ENCODE measurements at regions of chr2 and their contacts with region 1.

Region 1: DNA sequence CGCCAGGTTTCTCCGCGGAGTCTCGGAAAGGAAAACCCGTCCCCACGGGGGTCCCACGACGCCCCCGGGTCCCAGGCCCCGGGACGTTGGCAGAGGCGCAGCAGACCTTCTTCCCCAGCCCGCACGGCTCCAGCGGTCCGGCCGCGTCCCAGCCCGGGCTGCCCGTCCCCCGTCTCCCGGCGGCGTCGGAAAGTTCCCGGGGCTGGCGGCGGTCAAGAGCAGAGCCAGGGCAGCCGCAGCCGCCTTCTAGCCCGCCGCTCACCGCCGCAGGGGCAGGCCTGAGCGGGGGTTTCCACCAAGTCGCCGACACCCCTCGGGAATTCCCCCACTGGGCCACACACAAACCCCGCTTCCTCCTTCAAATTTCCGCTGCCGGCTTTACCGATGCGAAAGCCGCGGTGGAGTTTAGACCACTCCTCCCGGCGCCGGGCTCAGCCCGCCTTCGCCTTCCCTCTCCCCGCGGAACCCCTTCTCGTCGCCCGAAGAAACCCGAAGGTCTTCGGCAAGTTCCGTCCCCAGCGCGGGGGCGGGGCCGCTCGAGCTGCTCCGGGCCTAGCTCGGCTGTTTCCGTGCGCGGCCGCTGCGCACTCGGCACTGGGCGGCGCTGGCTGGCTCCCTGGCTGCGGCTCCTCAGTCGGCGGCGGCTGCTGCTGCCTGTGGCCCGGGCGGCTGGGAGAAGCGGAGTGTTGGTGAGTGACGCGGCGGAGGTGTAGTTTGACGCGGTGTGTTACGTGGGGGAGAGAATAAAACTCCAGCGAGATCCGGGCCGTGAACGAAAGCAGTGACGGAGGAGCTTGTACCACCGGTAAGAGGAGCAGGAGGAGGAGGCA is at the start of gene CREB1:
- DNase-seq: peak; percentile 99 to 100 (median 100)
- ATAC-seq: peak; percentile 87
- H3K4me3 ChIP-seq: peak within 1 kb of the TSS; percentile 75
- H3K4me3 Mint-ChIP-seq: peak within 1 kb of the TSS; percentile 95 to 100 (median 99)
- H3K27ac ChIP-seq: peak within 1 kb of the TSS; percentile 100
- H3K27ac Mint-ChIP-seq: peak within 1 kb of the TSS; percentile 98 to 100 (median 100)
- H3K4me1 ChIP-seq: peaks cover 52 to 59% of the 10 kb centered on the region in 2 donors
- H3K4me1 Mint-ChIP-seq: peaks cover 45 to 85% (median 69%) of the 10 kb centered on the region in 7 donors
- H3K27me3 ChIP-seq: no peaks in the 10 kb centered on the region
- H3K27me3 Mint-ChIP-seq: peaks cover 0 to 7% (median 0%) of the 10 kb centered on the region in 5 donors
- total RNA-seq, gene CREB1: 89.7 to 141 (median 115) TPM

Region 2: GRCh38 chr2:206085742-206086445 is 1443.7 kb before region 1 on chr2 and contains the start of gene INO80D:
- CTCF ChIA-PET with region 1: no interaction called
- POLR2A ChIA-PET with region 1: no interaction called
- intact Hi-C with region 1: loop called in 1 of 2 experiments (anchors 5 kb)
- DNase-seq: peak; percentile 71 to 92 (median 90)
- ATAC-seq: peak; percentile 95
- H3K4me3 ChIP-seq: peak within 1 kb of the TSS; percentile 97
- H3K4me3 Mint-ChIP-seq: peak within 1 kb of the TSS; percentile 96 to 99 (median 98)
- H3K27ac ChIP-seq: peak within 1 kb of the TSS; percentile 97
- H3K27ac Mint-ChIP-seq: peak within 1 kb of the TSS; percentile 98 to 100 (median 100)
- H3K4me1 ChIP-seq: peaks cover 0 to 9% of the 10 kb centered on the region in 2 donors
- H3K4me1 Mint-ChIP-seq: peaks cover 25 to 61% (median 47%) of the 10 kb centered on the region in 7 donors
- H3K27me3 ChIP-seq: no peaks in the 10 kb centered on the region
- H3K27me3 Mint-ChIP-seq: no peaks in the 10 kb centered on the region
- total RNA-seq, gene INO80D: 30.7 to 50.9 (median 43.4) TPM

Region 3: DNA sequence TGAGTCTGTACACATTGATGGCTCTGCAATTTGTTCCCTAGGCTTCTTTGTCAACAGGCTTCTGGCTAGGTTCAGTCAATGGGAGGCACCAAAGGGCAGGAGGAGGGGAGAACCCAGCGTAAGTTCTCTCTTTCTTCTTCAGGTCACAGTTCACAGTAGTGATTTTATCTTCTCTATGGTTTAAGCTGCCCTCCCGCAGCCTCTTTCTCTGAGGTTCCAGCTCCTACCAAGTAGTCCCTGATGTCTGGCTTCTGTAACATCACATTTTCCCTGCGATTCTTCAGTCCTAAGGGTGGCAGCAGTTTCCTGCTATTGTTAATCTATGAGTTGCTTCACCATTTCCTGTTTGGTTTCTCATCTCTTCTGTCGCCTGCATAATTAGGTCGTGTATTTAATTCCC is 482.8 kb before region 1 on chr2:
- CTCF ChIA-PET with region 1: interaction called, 3 read pairs
- POLR2A ChIA-PET with region 1: no interaction called
- intact Hi-C with region 1: loop called in 1 of 2 experiments (anchors 2 kb)
- DNase-seq: peak in 8 of 9 donors; percentile 24 to 69 (median 52)
- ATAC-seq: peak; percentile 79
- H3K4me3 ChIP-seq: no peak overlapping the region
- H3K4me3 Mint-ChIP-seq: peak overlapping the region in 8 of 10 donors; percentile 0 to 66 (median 12)
- H3K27ac ChIP-seq: no peak overlapping the region
- H3K27ac Mint-ChIP-seq: peak overlapping the region; percentile 2 to 78 (median 56)
- H3K4me1 ChIP-seq: peaks cover 0 to 4% of the 10 kb centered on the region in 2 donors
- H3K4me1 Mint-ChIP-seq: peaks cover 11 to 14% (median 13%) of the 10 kb centered on the region in 7 donors
- H3K27me3 ChIP-seq: no peaks in the 10 kb centered on the region
- H3K27me3 Mint-ChIP-seq: peaks cover 0 to 16% (median 0%) of the 10 kb centered on the region in 5 donors

Region 4: GRCh38 chr2:207184348-207184747 is 345.2 kb before region 1 on chr2:
- CTCF ChIA-PET with region 1: no interaction called
- POLR2A ChIA-PET with region 1: no interaction called
- intact Hi-C with region 1: no loop called
- DNase-seq: no peak
- ATAC-seq: no peak
- H3K4me3 ChIP-seq: no peak overlapping the region
- H3K4me3 Mint-ChIP-seq: no peak overlapping the region
- H3K27ac ChIP-seq: no peak overlapping the region
- H3K27ac Mint-ChIP-seq: no peak overlapping the region
- H3K4me1 ChIP-seq: no peaks in the 10 kb centered on the region
- H3K4me1 Mint-ChIP-seq: peaks cover 0 to 3% (median 0%) of the 10 kb centered on the region in 7 donors
- H3K27me3 ChIP-seq: no peaks in the 10 kb centered on the region
- H3K27me3 Mint-ChIP-seq: peaks cover 0 to 10% (median 0%) of the 10 kb centered on the region in 5 donors

Region 5: DNA sequence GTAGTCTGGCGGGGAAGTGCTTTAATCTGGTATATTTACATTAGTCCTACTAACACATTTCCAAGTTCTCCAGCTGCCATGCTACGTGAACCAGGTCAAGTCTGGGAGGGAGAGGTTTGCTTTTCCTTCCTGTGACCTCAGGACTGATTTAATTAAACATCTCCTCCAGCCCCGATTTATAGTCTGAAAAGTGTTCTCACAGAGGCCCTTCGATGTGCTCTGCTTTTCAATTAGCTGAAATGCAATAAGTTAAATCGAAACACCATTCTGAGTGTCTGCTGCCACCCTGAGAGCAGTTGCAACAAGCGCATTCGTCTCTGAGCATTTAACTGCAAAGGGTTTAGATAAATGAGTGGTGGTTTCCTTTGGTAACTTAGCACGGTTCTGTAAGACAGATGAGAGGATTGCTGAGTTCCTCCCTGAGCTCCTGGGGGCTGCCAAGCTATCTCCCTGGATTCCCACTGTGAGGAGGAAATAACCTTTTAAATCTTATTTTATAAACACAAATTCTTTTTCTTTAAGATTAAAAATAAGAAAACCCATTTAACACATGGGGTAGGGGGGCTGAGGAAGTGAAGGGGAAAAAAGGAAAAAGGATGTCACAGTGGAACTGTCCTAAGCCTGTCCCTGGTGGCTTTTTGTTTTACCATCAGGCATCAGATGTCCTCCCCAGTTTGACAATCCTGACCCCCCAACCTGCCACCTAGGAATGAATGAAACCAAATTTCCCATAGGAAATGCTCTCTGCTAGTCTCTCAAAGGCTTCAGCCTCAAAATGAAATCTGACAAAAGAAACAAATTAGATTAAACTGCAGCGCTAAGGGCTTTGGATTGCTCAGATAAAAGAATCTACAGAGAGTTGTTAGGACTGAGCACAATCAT is 56.3 kb before region 1 on chr2:
- CTCF ChIA-PET with region 1: interaction called, 3 read pairs
- POLR2A ChIA-PET with region 1: no interaction called
- intact Hi-C with region 1: loop called in 1 of 2 experiments (anchors 1 kb)
- DNase-seq: peak in 8 of 9 donors; percentile 25 to 68 (median 52)
- ATAC-seq: peak; percentile 76
- H3K4me3 ChIP-seq: no peak overlapping the region
- H3K4me3 Mint-ChIP-seq: peak overlapping the region in 4 of 10 donors; percentile 20 to 52 (median 42)
- H3K27ac ChIP-seq: no peak overlapping the region
- H3K27ac Mint-ChIP-seq: peak overlapping the region in 7 of 9 donors; percentile 14 to 71 (median 48)
- H3K4me1 ChIP-seq: no peaks in the 10 kb centered on the region
- H3K4me1 Mint-ChIP-seq: peaks cover 6 to 23% (median 18%) of the 10 kb centered on the region in 7 donors
- H3K27me3 ChIP-seq: no peaks in the 10 kb centered on the region
- H3K27me3 Mint-ChIP-seq: peaks cover 0 to 4% (median 0%) of the 10 kb centered on the region in 5 donors

Region 6: GRCh38 chr2:207540431-207540830 is 10.9 kb after region 1 on chr2:
- CTCF ChIA-PET with region 1: no interaction called
- POLR2A ChIA-PET with region 1: interaction called, 22 read pairs
- intact Hi-C with region 1: no loop called
- DNase-seq: no peak
- ATAC-seq: no peak
- H3K4me3 ChIP-seq: no peak overlapping the region
- H3K4me3 Mint-ChIP-seq: peak overlapping the region in 5 of 10 donors; percentile 7 to 51 (median 29)
- H3K27ac ChIP-seq: no peak overlapping the region
- H3K27ac Mint-ChIP-seq: peak overlapping the region in 2 of 9 donors; percentile 7 to 76
- H3K4me1 ChIP-seq: peaks cover 7 to 41% of the 10 kb centered on the region in 2 donors
- H3K4me1 Mint-ChIP-seq: peaks cover 40 to 87% (median 71%) of the 10 kb centered on the region in 7 donors
- H3K27me3 ChIP-seq: no peaks in the 10 kb centered on the region
- H3K27me3 Mint-ChIP-seq: no peaks in the 10 kb centered on the region

Region 7: GRCh38 chr2:207584952-207585351 is 55.4 kb after region 1 on chr2:
- CTCF ChIA-PET with region 1: no interaction called
- POLR2A ChIA-PET with region 1: interaction called, 5 read pairs
- intact Hi-C with region 1: loop called in 1 of 2 experiments (anchors 10 kb)
- DNase-seq: no peak
- ATAC-seq: no peak
- H3K4me3 ChIP-seq: no peak overlapping the region
- H3K4me3 Mint-ChIP-seq: no peak overlapping the region
- H3K27ac ChIP-seq: no peak overlapping the region
- H3K27ac Mint-ChIP-seq: peak overlapping the region in 7 of 9 donors; percentile 27 to 71 (median 46)
- H3K4me1 ChIP-seq: no peaks in the 10 kb centered on the region
- H3K4me1 Mint-ChIP-seq: peaks cover 5 to 54% (median 18%) of the 10 kb centered on the region in 7 donors
- H3K27me3 ChIP-seq: no peaks in the 10 kb centered on the region
- H3K27me3 Mint-ChIP-seq: no peaks in the 10 kb centered on the region

Region 8: DNA sequence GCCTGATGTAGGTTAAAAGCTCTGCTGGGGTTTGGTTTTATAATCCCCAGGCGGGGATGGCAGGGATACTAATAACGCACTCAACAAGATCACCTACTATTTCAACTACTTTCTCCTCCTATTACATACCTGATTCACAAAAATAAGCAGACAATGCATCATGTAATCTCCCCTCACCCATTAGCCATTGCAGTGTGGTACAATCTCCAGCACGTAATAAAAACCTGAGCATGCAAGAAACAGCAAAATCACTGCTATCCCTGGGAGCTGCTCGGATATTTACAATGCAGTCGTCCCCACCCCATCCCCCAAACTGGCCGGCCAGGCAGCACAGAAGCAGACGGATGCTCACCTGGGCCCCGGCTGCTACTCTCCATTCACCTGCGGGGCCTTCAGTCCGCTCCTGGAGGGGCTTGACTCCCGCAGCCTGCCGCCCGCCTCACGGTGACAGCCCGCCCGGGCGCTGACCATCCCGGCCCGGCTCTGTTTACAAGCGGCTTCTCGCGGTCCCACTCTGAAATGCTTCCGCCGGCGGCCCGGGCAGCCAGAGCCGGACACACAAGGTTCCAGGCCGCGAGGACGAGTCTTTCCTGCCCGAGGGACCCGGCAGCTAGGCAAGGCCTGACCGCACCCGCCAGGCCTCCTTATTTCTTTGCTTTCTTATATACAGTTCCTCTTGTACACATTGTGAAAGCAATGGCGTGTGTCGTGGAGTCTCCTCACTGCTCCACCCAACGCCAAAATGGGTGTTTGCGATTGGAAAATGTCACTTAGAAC is 495.7 kb after region 1 on chr2 and contains the start of gene PLEKHM3:
- CTCF ChIA-PET with region 1: no interaction called
- POLR2A ChIA-PET with region 1: interaction called, 3 read pairs
- intact Hi-C with region 1: loop called (anchors 5 kb)
- DNase-seq: peak; percentile 12 to 80 (median 62)
- ATAC-seq: peak; percentile 93
- H3K4me3 ChIP-seq: peak within 1 kb of the TSS; percentile 88
- H3K4me3 Mint-ChIP-seq: peak within 1 kb of the TSS; percentile 85 to 100 (median 96)
- H3K27ac ChIP-seq: peak within 1 kb of the TSS; percentile 76
- H3K27ac Mint-ChIP-seq: peak within 1 kb of the TSS; percentile 89 to 98 (median 94)
- H3K4me1 ChIP-seq: peaks cover 0 to 4% of the 10 kb centered on the region in 2 donors
- H3K4me1 Mint-ChIP-seq: peaks cover 12 to 34% (median 27%) of the 10 kb centered on the region in 7 donors
- H3K27me3 ChIP-seq: no peaks in the 10 kb centered on the region
- H3K27me3 Mint-ChIP-seq: no peaks in the 10 kb centered on the region
- total RNA-seq, gene PLEKHM3: 6.1 to 19.4 (median 15.5) TPM